Activated CD8-positive, alpha-beta T cell treated with anti-CD3 and anti-CD28 coated beads for 36 hours (primary cell): ENCODE measurements at regions of chr1 and their contacts with region 1.

Region 1: GRCh38 chr1:94854458-94855306 is 34.5 kb downstream of the SLC44A3 start:
- DNase-seq: peak; percentile 91
- ATAC-seq: peak; percentile 99
- H3K4me3 Mint-ChIP-seq: no peak overlapping the region
- H3K27ac Mint-ChIP-seq: no peak overlapping the region
- H3K4me1 Mint-ChIP-seq: no peaks in the 10 kb centered on the region
- H3K27me3 Mint-ChIP-seq: peaks cover 2% of the 10 kb centered on the region
- CTCF ChIP-seq: peak; percentile 87

Region 2: DNA sequence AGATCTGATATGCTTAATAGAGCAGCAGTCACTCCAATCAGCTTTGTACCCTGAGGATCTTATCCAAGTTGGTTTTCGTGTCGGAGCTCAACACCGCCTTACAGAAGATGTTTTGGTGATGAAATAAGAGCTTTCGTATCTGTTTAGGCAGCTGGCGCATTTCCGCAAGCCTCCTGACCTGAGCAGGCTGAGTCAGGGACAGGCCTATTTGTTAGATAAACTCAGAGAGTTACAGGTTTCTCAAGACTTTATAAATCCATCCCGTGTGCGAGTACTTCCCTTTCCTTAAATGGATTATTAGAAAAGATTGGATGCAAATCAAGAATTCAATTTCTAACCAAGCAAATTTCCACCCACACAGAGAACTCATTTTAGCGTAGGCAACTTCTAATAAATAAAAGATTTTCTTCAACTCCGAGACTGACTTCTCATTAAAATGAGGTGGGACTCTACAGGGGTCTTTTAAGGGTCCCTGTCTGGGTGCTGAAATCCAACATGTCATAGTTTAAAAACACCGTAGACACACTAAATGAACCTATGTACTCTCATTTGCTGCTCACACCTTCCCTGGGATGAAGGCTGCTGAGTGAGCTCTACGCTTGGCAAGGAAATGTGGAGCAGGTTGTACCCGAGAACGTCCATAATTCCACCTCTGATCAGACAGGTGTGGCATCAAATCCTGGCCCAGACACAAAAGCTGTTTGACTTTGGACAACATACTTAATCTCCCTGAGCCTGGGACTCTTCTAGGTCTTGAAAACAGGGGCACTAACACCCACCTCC is 206.3 kb before region 1 on chr1:
- CTCF ChIA-PET with region 1: no interaction called
- POLR2A ChIA-PET with region 1: no interaction called
- intact Hi-C with region 1: no loop called
- DNase-seq: no peak
- ATAC-seq: no peak
- H3K4me3 Mint-ChIP-seq: no peak overlapping the region
- H3K27ac Mint-ChIP-seq: no peak overlapping the region
- H3K4me1 Mint-ChIP-seq: no peaks in the 10 kb centered on the region
- H3K27me3 Mint-ChIP-seq: peaks cover 1% of the 10 kb centered on the region
- CTCF ChIP-seq: no peak

Region 3: GRCh38 chr1:94713472-94714141 is 141.1 kb before region 1 on chr1:
- CTCF ChIA-PET with region 1: no interaction called
- POLR2A ChIA-PET with region 1: no interaction called
- intact Hi-C with region 1: no loop called
- DNase-seq: peak; percentile 18
- ATAC-seq: no peak
- H3K4me3 Mint-ChIP-seq: no peak overlapping the region
- H3K27ac Mint-ChIP-seq: no peak overlapping the region
- H3K4me1 Mint-ChIP-seq: no peaks in the 10 kb centered on the region
- H3K27me3 Mint-ChIP-seq: no peaks in the 10 kb centered on the region
- CTCF ChIP-seq: no peak

Region 4: GRCh38 chr1:94734963-94735899 is 119.5 kb before region 1 on chr1:
- CTCF ChIA-PET with region 1: no interaction called
- POLR2A ChIA-PET with region 1: no interaction called
- intact Hi-C with region 1: no loop called
- DNase-seq: peak; percentile 23
- ATAC-seq: peak; percentile 39
- H3K4me3 Mint-ChIP-seq: no peak overlapping the region
- H3K27ac Mint-ChIP-seq: no peak overlapping the region
- H3K4me1 Mint-ChIP-seq: peaks cover 10% of the 10 kb centered on the region
- H3K27me3 Mint-ChIP-seq: peaks cover 12% of the 10 kb centered on the region
- CTCF ChIP-seq: no peak

Region 5: DNA sequence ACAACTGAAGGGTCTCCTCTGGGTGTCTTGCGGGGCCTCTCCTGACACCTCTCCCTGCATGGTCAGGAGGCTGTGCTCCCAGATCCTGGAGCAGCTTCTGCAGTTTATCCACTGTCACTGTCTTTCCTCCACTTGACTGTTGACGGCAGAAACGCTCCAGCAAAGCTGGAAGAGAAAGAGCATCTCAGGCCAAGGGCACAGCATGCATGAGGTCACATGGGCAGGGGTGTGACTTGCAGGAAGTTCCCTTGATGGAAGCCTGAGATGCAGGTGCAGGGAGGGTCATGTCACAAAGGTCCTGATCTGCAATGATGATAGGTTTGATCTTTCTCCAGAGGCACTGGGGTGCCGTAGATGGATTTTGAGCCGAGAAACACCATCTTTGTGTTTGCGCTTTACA is 11.3 kb before region 1 on chr1:
- CTCF ChIA-PET with region 1: interaction called, 17 read pairs
- POLR2A ChIA-PET with region 1: no interaction called
- intact Hi-C with region 1: no loop called
- DNase-seq: peak; percentile 5
- ATAC-seq: no peak
- H3K4me3 Mint-ChIP-seq: no peak overlapping the region
- H3K27ac Mint-ChIP-seq: no peak overlapping the region
- H3K4me1 Mint-ChIP-seq: no peaks in the 10 kb centered on the region
- H3K27me3 Mint-ChIP-seq: peaks cover 2% of the 10 kb centered on the region
- CTCF ChIP-seq: no peak

Region 6: GRCh38 chr1:94876362-94876761 is 21.7 kb after region 1 on chr1:
- CTCF ChIA-PET with region 1: interaction called, 17 read pairs
- POLR2A ChIA-PET with region 1: no interaction called
- intact Hi-C with region 1: no loop called
- DNase-seq: no peak
- ATAC-seq: no peak
- H3K4me3 Mint-ChIP-seq: no peak overlapping the region
- H3K27ac Mint-ChIP-seq: no peak overlapping the region
- H3K4me1 Mint-ChIP-seq: peaks cover 10% of the 10 kb centered on the region
- H3K27me3 Mint-ChIP-seq: no peaks in the 10 kb centered on the region
- CTCF ChIP-seq: no peak

Region 7: GRCh38 chr1:94920051-94920450 is 65.4 kb after region 1 on chr1:
- CTCF ChIA-PET with region 1: interaction called, 14 read pairs
- POLR2A ChIA-PET with region 1: no interaction called
- intact Hi-C with region 1: no loop called
- DNase-seq: no peak
- ATAC-seq: no peak
- H3K4me3 Mint-ChIP-seq: no peak overlapping the region
- H3K27ac Mint-ChIP-seq: no peak overlapping the region
- H3K4me1 Mint-ChIP-seq: peaks cover 7% of the 10 kb centered on the region
- H3K27me3 Mint-ChIP-seq: peaks cover 4% of the 10 kb centered on the region
- CTCF ChIP-seq: no peak

Region 8: DNA sequence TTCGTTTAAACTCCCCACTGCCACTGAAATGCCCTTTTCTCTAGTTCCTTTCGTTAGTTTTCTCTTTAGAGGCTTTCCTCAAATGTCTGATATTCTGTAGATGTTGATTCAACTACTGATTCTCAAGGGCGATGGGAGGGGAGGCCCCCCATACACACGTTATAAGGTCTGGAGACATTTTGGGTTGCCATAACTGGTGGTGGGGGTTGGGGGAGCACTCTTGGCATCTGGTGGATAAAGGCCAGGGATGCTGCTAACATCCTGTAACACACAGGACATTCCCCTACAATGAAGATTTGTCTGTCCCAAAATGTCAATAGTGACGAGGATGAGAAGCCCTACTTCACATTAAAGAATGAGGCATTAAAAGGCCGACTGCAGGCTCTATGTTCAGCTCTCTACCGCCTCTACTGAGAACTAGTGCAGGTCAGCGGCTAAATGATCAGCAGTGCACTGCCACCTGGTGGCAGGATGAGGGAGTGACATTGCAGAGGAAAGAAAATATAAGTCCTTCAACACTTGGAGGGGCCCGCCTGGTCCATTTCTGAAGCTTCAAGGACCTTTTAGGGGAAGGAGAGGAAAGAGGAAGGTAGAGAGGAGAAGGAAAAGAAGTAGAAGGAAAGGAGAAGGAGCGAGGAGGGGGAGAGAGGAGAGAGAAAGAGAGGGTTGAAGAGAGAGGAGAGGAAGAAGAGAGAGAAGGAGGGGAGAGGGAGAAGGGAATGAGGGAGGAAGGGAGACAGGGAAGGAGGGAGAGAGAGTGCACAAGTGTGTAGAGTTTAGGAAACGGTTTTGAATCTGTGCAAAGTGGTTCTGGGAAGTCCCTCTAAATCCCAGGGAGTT is 188.7 kb after region 1 on chr1:
- CTCF ChIA-PET with region 1: interaction called, 228 read pairs
- POLR2A ChIA-PET with region 1: interaction called, 8 read pairs
- intact Hi-C with region 1: loop called (anchors 1 kb)
- DNase-seq: peak; percentile 91
- ATAC-seq: peak; percentile 97
- H3K4me3 Mint-ChIP-seq: no peak overlapping the region
- H3K27ac Mint-ChIP-seq: no peak overlapping the region
- H3K4me1 Mint-ChIP-seq: no peaks in the 10 kb centered on the region
- H3K27me3 Mint-ChIP-seq: no peaks in the 10 kb centered on the region
- CTCF ChIP-seq: peak; percentile 98

Region 9: DNA sequence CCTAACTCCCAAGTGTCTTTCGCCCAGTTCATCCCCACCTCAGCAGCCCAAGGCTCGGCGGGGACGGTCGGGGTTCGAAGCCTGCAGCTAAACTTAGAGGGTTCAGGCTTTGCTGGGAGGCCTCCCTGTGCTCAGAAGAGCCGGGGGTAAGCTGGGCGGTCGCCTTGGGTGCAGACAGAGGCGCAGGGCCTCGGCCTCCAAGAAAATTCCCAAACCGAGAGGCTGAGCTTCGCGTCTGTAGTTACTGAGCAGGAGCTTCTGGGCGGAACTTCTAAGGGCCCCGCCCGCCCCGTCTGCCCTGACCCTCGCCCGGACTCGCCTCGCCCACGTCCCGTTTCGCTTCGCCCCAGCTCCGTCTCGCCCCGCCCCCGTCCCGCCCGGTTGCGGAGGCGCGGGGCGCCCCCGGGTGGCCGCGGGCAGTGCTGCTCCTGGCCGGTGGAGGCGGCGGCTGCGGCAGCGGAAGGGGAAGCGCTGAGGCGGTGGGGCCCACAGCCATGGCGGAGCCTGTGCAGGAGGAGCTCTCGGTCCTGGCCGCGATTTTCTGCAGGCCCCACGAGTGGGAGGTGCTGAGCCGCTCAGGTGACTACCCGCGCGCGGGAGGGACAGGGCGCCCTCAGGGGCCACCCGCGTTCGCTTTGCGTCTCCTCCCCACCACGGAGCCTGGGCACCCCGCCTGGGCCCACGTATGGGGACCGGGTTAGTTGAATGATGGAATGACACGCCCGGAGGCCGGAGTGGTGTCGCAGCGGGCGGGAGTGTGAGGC is 379.2 kb after region 1 on chr1 and contains the start of gene RWDD3:
- CTCF ChIA-PET with region 1: interaction called, 16 read pairs
- POLR2A ChIA-PET with region 1: no interaction called
- intact Hi-C with region 1: no loop called
- DNase-seq: peak; percentile 93
- ATAC-seq: peak; percentile 97
- H3K4me3 Mint-ChIP-seq: peak within 1 kb of the TSS; percentile 91
- H3K27ac Mint-ChIP-seq: peak within 1 kb of the TSS; percentile 91
- H3K4me1 Mint-ChIP-seq: peaks cover 34% of the 10 kb centered on the region
- H3K27me3 Mint-ChIP-seq: peaks cover 14% of the 10 kb centered on the region
- CTCF ChIP-seq: peak; percentile 65
- total RNA-seq, gene RWDD3: 15.2 to 17.8 TPM